OCI-LY7 (cell line): ENCODE measurements at regions of chr9 and their contacts with region 1.

Region 1: DNA sequence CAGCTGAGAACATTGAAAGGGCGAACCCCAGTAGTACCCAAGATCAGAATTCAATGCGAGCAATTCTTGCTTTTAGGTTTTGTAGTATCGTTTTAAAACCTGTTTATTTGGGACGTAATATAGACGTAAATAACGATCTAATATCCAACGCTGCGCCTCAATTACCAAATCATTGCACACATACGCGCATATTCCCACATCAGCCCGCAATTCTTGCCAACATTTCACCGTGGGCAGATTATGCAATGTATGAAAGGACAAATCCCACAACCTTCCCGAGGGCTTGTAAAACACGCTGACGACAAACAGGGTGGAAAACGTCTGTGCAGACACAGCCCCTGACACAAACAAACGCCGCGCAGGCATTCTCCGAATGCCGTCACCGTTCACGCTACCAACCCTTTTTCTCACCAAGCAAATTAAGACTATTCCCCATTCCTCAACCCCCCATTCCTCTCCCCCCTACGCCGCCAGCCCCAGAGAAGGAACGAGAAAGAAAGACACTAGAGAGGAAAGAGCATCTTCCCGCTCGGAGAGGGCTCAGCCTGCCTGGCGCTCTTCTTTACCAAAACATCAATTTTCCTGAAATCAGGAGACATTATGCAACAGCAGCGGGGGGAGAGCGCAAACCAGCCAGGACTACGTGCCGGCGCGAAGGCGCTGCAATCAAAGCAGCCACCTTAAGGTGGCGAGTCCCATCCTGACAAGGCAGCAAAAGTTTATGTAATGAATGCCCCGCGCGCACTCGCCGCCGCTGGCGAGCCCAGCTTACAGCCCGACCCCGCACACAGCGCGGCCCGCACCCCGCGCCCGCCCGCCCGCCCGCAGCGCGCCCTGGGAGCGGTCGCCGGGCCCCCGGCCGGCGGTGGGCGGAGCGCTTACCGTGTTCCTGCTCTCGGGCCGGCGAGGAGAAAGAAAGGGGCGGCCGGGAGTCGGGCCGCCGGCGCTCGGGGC is 597 bp downstream of the NFIL3 start:
- DNase-seq: peak; percentile 76
- H3K4me3 ChIP-seq: peak overlapping the region; percentile 85
- H3K27ac ChIP-seq: no peak overlapping the region
- H3K4me1 ChIP-seq: peaks cover 22% of the 10 kb centered on the region
- CTCF ChIP-seq: peak; percentile 49

Region 2: DNA sequence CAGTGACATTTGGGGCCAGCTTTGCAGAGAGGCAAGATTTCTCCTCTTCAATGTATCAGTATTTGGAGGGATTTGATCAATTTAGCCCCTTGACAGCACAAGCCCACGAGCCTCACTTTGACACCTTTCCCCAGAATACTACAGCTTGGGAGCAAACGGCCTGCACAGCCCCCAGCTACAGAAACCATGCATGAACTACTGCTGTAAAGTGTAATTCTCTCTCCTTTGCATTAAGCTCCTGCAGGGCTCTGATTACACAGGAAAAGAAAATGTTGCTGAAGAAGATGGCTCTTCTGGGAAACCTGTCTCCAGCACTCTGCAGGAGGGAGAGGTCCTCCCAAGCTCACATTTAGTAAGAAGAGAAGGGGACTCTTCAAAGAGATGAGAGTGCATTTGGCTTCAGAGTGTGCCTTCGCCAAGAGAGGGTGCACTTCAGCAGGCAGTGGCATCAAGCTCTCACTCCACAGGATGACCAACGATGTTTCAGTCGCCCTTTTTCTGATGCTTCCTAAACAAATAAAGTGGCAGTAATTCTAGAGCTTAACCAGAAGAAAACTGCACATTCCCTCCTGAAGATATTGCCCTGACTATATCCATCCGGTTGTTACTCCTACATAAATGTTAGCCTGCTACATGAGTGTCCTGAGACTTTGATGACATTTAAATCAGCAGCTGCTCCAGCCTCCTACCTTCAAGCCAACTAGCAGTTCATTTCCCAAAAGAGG is 333.5 kb before region 1 on chr9:
- CTCF ChIA-PET with region 1: interaction called, 10 read pairs
- POLR2A ChIA-PET with region 1: interaction called, 3 read pairs
- intact Hi-C with region 1: loop called (anchors 2 kb)
- DNase-seq: peak; percentile 61
- H3K4me3 ChIP-seq: no peak overlapping the region
- H3K27ac ChIP-seq: no peak overlapping the region
- H3K4me1 ChIP-seq: no peaks in the 10 kb centered on the region
- CTCF ChIP-seq: peak; percentile 75

Region 3: GRCh38 chr9:91266448-91266847 is 156.6 kb before region 1 on chr9:
- CTCF ChIA-PET with region 1: no interaction called
- POLR2A ChIA-PET with region 1: no interaction called
- intact Hi-C with region 1: no loop called
- DNase-seq: no peak
- H3K4me3 ChIP-seq: no peak overlapping the region
- H3K27ac ChIP-seq: no peak overlapping the region
- H3K4me1 ChIP-seq: no peaks in the 10 kb centered on the region
- CTCF ChIP-seq: no peak

Region 4: GRCh38 chr9:91361291-91362050 is 61.6 kb before region 1 on chr9 and contains the start of gene AUH:
- CTCF ChIA-PET with region 1: no interaction called
- POLR2A ChIA-PET with region 1: no interaction called
- intact Hi-C with region 1: loop called (anchors 2 kb)
- DNase-seq: peak; percentile 89
- H3K4me3 ChIP-seq: peak within 1 kb of the TSS; percentile 80
- H3K27ac ChIP-seq: peak within 1 kb of the TSS; percentile 22
- H3K4me1 ChIP-seq: peaks cover 25% of the 10 kb centered on the region
- CTCF ChIP-seq: no peak
- total RNA-seq, gene AUH: 24.5 and 31.7 TPM in 2 replicates

Region 5: DNA sequence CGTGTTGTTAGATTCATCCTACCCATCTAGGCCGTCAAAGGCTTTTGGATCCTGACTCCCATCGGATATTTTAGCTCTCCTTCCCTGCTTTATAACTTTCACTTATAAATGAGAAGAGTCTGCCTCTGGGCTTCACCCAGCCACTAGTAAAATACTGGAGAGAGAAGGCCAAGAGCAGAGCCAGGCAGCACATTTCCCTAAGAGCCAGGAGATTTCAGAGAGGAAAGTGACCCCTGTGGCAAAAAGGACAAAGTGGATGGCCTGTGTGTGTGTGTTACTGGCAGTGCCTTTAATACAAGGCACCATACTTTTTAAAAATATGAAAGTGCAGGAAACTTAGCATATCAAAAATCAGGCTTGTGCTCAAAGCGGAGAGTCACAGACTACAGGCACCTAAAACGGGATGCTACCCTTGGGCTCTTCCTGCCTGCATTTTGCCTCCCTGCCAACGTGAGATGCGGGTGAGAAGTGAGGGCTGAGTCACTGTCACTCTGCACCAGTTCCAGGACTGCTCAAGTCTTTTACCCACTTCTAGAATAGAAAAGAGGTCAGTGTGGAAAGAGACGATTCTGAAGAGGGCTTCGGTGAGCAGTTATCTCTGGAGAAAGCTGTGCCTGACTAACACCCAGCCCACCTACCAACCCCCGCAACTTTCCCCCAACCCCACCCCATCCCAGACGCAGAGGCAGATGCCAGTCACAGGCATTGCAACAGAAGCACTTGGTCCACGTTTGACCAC is 15.3 kb before region 1 on chr9:
- CTCF ChIA-PET with region 1: no interaction called
- POLR2A ChIA-PET with region 1: no interaction called
- intact Hi-C with region 1: no loop called
- DNase-seq: no peak
- H3K4me3 ChIP-seq: no peak overlapping the region
- H3K27ac ChIP-seq: no peak overlapping the region
- H3K4me1 ChIP-seq: peaks cover 6% of the 10 kb centered on the region
- CTCF ChIP-seq: no peak

Region 6: DNA sequence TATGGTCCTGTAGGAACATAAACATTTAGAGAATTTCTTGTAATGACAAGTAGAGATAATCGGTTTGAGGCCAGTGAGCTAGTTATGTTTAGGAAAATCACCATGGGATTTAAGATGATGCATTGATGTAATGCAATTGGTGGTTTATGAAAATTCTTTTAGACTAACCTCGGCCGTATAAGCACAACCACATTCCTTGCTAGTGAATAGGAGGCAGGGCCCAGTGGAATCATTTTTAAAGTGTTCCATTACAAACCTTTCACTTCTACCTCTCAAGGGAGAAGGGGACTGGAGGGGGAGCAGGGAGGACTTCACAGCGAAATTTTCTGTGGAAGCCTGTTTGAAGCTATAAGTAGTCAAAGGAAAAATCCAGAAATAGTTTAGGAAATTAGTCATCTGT is 72.4 kb after region 1 on chr9:
- CTCF ChIA-PET with region 1: no interaction called
- POLR2A ChIA-PET with region 1: no interaction called
- intact Hi-C with region 1: no loop called
- DNase-seq: no peak
- H3K4me3 ChIP-seq: no peak overlapping the region
- H3K27ac ChIP-seq: no peak overlapping the region
- H3K4me1 ChIP-seq: no peaks in the 10 kb centered on the region
- CTCF ChIP-seq: no peak

Region 7: GRCh38 chr9:91720751-91721705 is 298.0 kb after region 1 on chr9:
- CTCF ChIA-PET with region 1: no interaction called
- POLR2A ChIA-PET with region 1: no interaction called
- intact Hi-C with region 1: loop called (anchors 5 kb)
- DNase-seq: peak; percentile 91
- H3K4me3 ChIP-seq: peak overlapping the region; percentile 47
- H3K27ac ChIP-seq: peak overlapping the region; percentile 90
- H3K4me1 ChIP-seq: peaks cover 35% of the 10 kb centered on the region
- CTCF ChIP-seq: peak; percentile 69